ENCODE measurements at regions of chr17 and their contacts with region 1.

Region 1: DNA sequence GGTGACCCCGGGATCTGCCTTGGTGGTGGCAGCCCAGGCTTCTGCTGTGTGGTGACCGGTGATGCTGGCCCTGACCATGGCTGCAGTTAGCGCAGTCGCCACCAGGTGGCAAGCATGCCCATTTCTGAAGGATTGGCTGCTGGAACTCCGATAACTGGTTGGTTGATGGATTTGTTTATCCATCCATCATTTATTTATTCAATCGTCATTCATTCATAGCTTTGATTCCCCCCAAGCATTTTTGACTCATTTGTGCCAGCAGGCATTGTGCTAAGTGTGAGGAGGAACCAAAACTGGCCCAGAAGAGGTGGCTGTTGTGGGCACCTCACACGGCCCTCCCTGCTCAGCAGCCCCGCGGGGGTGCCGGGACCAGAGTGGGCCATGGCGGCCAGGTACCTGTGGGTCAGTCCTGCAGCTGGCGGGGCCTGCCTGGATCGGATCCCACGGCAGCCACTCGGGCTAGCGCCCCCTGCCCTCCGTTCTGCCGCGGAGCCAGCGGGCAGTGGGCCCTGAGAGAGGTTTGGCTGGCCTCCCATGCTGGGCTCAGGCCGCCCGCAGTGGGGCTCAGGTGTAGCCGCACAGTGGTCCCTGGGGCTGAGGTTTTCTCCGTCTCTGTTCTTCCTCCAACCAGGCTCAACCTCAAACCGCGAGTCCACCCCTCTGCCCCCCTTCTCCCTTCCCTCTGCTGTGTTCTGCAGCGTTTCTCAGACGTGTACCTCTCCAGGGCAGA is 28.8 kb upstream of the ITGA3 start:
- DNase-seq: peak; percentile 81 to 98
- H3K4me3 ChIP-seq: no peak overlapping the region
- CTCF ChIP-seq: peak in 1 of 3 donors; percentile 84
- POLR2A ChIP-seq: no peak

Region 2: GRCh38 chr17:49928837-49929475 is 98.1 kb before region 1 on chr17:
- intact Hi-C with region 1: no loop called
- DNase-seq: no peak
- H3K4me3 ChIP-seq: no peak overlapping the region
- CTCF ChIP-seq: no peak
- POLR2A ChIP-seq: no peak

Region 3: GRCh38 chr17:50087912-50088405 is 60.9 kb after region 1 on chr17:
- intact Hi-C with region 1: loop called (anchors 2 kb)
- DNase-seq: no peak
- H3K4me3 ChIP-seq: no peak overlapping the region
- CTCF ChIP-seq: no peak
- POLR2A ChIP-seq: no peak

Measured in lower leg skin (tissue), 4 donors.